Naive thymus-derived CD4-positive, alpha-beta T cell (primary cell): ENCODE measurements at regions of chr11 and their contacts with region 1.

Region 1: GRCh38 chr11:61947486-61948210 is 2.5 kb upstream of the BEST1 start:
- DNase-seq: peak; percentile 41 to 64 (median 47)
- ATAC-seq: peak; percentile 88
- H3K4me3 ChIP-seq: no peak overlapping the region
- H3K4me3 Mint-ChIP-seq: no peak overlapping the region
- H3K27ac ChIP-seq: no peak overlapping the region
- H3K27ac Mint-ChIP-seq: peak overlapping the region in 2 of 9 donors; percentile 14 to 70
- H3K4me1 ChIP-seq: peaks cover 0 to 3% of the 10 kb centered on the region in 2 donors
- H3K4me1 Mint-ChIP-seq: peaks cover 0 to 5% (median 0%) of the 10 kb centered on the region in 7 donors
- H3K27me3 ChIP-seq: no peaks in the 10 kb centered on the region
- H3K27me3 Mint-ChIP-seq: peaks cover 0 to 6% (median 3%) of the 10 kb centered on the region in 5 donors

Region 2: GRCh38 chr11:61871158-61871597 is 76.5 kb before region 1 on chr11:
- CTCF ChIA-PET with region 1: interaction called, 3 read pairs
- POLR2A ChIA-PET with region 1: no interaction called
- intact Hi-C with region 1: loop called (anchors 1 kb)
- DNase-seq: peak; percentile 23 to 77 (median 50)
- ATAC-seq: peak; percentile 94
- H3K4me3 ChIP-seq: no peak overlapping the region
- H3K4me3 Mint-ChIP-seq: peak overlapping the region; percentile 34 to 87 (median 70)
- H3K27ac ChIP-seq: no peak overlapping the region
- H3K27ac Mint-ChIP-seq: peak overlapping the region in 3 of 9 donors; percentile 43 to 52 (median 46)
- H3K4me1 ChIP-seq: no peaks in the 10 kb centered on the region
- H3K4me1 Mint-ChIP-seq: peaks cover 0 to 8% (median 5%) of the 10 kb centered on the region in 7 donors
- H3K27me3 ChIP-seq: no peaks in the 10 kb centered on the region
- H3K27me3 Mint-ChIP-seq: peaks cover 0 to 8% (median 0%) of the 10 kb centered on the region in 5 donors

Region 3: GRCh38 chr11:61899146-61899841 is 48.4 kb before region 1 on chr11:
- CTCF ChIA-PET with region 1: interaction called, 20 read pairs
- POLR2A ChIA-PET with region 1: no interaction called
- intact Hi-C with region 1: loop called (anchors 1 kb)
- DNase-seq: peak; percentile 88 to 98 (median 93)
- ATAC-seq: peak; percentile 98
- H3K4me3 ChIP-seq: no peak overlapping the region
- H3K4me3 Mint-ChIP-seq: no peak overlapping the region
- H3K27ac ChIP-seq: no peak overlapping the region
- H3K27ac Mint-ChIP-seq: peak overlapping the region; percentile 55 to 93 (median 69)
- H3K4me1 ChIP-seq: peaks cover 4% of the 10 kb centered on the region in 2 donors
- H3K4me1 Mint-ChIP-seq: peaks cover 4 to 7% (median 5%) of the 10 kb centered on the region in 7 donors
- H3K27me3 ChIP-seq: no peaks in the 10 kb centered on the region
- H3K27me3 Mint-ChIP-seq: peaks cover 0 to 4% (median 0%) of the 10 kb centered on the region in 5 donors

Region 4: DNA sequence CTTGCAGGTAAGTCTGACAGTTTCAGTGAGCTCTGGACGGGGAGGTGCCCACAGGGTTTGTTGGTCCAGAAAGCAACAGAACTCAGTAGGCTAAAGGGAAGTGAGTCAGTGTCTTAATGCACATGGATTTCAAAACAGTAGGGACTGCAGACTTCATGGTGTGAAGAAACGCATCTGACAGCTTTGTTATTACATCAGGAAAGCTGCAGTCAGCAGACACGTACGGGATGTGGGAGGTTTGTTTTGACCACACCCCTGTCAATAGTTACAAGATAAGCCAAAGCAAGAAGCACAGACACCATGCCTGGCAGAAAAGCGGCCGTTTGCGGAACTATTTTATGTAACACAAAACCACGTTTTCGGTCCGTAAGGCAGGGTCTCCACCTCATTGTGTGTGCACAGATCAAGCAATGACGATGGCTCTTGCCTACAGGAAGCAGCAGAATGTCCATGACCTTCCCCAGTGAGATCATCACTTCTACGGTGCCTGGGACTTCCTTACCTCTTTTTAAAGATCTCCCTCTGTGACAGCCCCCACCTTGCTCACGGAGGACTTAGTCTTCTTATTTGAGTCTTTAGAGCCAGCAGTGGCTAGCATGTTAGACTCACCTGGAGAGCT is 77.9 kb after region 1 on chr11:
- CTCF ChIA-PET with region 1: interaction called, 7 read pairs
- POLR2A ChIA-PET with region 1: no interaction called
- intact Hi-C with region 1: loop called in 1 of 2 experiments (anchors 5 kb)
- DNase-seq: peak; percentile 45 to 97 (median 93)
- ATAC-seq: peak; percentile 91
- H3K4me3 ChIP-seq: peak overlapping the region; percentile 11
- H3K4me3 Mint-ChIP-seq: peak overlapping the region; percentile 68 to 84 (median 76)
- H3K27ac ChIP-seq: peak overlapping the region; percentile 93
- H3K27ac Mint-ChIP-seq: peak overlapping the region; percentile 95 to 100 (median 99)
- H3K4me1 ChIP-seq: peaks cover 9 to 17% of the 10 kb centered on the region in 2 donors
- H3K4me1 Mint-ChIP-seq: peaks cover 6 to 28% (median 24%) of the 10 kb centered on the region in 7 donors
- H3K27me3 ChIP-seq: no peaks in the 10 kb centered on the region
- H3K27me3 Mint-ChIP-seq: no peaks in the 10 kb centered on the region

Region 5: GRCh38 chr11:62054484-62055121 is 107.0 kb after region 1 on chr11:
- CTCF ChIA-PET with region 1: interaction called, 3 read pairs
- POLR2A ChIA-PET with region 1: no interaction called
- intact Hi-C with region 1: loop called (anchors 1 to 10 kb)
- DNase-seq: peak in 7 of 9 donors; percentile 5 to 47 (median 21)
- ATAC-seq: no peak
- H3K4me3 ChIP-seq: no peak overlapping the region
- H3K4me3 Mint-ChIP-seq: no peak overlapping the region
- H3K27ac ChIP-seq: no peak overlapping the region
- H3K27ac Mint-ChIP-seq: no peak overlapping the region
- H3K4me1 ChIP-seq: no peaks in the 10 kb centered on the region
- H3K4me1 Mint-ChIP-seq: no peaks in the 10 kb centered on the region
- H3K27me3 ChIP-seq: no peaks in the 10 kb centered on the region
- H3K27me3 Mint-ChIP-seq: peaks cover 0 to 24% (median 0%) of the 10 kb centered on the region in 5 donors